ENCODE measurements at regions of chr1 and their contacts with region 1.

Region 1: DNA sequence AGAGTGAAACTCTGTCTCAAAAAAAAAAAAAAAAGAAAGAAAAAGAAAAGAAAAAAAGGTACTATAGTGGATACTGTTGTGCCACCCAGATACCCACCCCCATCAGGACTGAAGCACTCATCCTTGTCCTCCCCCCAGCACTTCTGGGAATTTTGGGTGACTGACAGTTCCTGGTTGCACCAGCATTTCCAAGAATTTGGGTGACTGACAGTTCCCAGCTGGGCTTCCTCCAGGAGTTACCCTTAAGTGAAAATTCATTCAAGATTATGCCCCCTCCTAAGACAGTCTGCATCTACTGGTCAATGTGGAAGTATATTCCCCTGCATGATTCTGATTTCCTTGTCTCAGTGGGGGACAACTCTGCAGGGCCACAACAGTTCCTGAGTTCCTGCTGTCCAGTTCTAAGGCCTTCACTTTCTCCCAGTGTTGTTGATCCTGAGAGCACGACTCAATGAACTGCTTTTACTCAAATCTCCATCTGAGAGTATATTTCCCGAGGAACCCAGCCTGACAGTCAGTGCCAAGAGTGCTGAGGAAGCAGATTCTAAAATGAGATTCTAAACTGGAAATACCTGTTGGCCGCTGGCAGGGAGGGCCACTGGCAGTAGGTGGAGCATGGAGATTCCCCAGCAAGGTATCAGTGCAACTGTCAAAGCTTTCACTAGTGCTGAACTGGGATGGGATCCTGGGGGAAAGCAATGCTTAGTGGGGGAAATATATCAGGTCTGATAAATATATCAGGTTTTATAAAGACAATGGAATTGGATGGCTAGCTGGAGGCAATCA is 18.5 kb downstream of the RIIAD1 start:
- DNase-seq: no peak
- ATAC-seq: no peak
- H3K4me3 Mint-ChIP-seq: no peak overlapping the region
- H3K27ac Mint-ChIP-seq: no peak overlapping the region
- H3K4me1 Mint-ChIP-seq: peaks cover 9% of the 10 kb centered on the region
- H3K27me3 Mint-ChIP-seq: peaks cover 5% of the 10 kb centered on the region
- CTCF ChIP-seq: no peak

Region 2: GRCh38 chr1:151720974-151721787 is 18.6 kb before region 1 on chr1 and contains the start of gene RIIAD1:
- CTCF ChIA-PET with region 1: interaction called, 48 read pairs
- POLR2A ChIA-PET with region 1: no interaction called
- DNase-seq: peak; percentile 61
- ATAC-seq: peak; percentile 85
- H3K4me3 Mint-ChIP-seq: peak within 1 kb of the TSS; percentile 76
- H3K27ac Mint-ChIP-seq: no peak within 1 kb of the TSS
- H3K4me1 Mint-ChIP-seq: peaks cover 31% of the 10 kb centered on the region
- H3K27me3 Mint-ChIP-seq: peaks cover 81% of the 10 kb centered on the region
- CTCF ChIP-seq: no peak
- total RNA-seq, gene RIIAD1: 0.92 TPM in 1 of 3 replicates, not detected in the others

Region 3: DNA sequence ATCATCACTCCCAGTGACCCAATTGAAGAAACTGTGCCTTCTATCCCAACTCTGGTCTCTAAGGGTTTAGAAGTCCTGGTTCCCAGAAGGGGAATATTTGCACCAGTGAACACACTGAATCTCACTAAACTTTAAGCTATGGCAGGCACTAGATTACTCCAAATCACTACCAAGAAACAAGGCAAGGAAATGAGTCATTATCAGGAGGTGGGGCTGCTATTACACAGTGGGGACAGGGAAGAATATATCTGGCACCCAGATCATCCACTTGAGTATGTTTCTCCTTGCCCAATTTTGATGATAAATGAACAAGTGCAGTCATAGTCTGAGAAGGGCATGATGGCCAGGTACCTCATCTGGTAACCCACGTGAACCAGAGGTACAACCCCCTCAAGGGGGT is 16.5 kb after region 1 on chr1:
- CTCF ChIA-PET with region 1: no interaction called
- POLR2A ChIA-PET with region 1: no interaction called
- DNase-seq: no peak
- ATAC-seq: no peak
- H3K4me3 Mint-ChIP-seq: no peak overlapping the region
- H3K27ac Mint-ChIP-seq: no peak overlapping the region
- H3K4me1 Mint-ChIP-seq: no peaks in the 10 kb centered on the region
- H3K27me3 Mint-ChIP-seq: no peaks in the 10 kb centered on the region
- CTCF ChIP-seq: no peak